Activated naive CD4-positive, alpha-beta T cell treated with anti-CD3 and anti-CD28 coated beads for 36 hours (primary cell): ENCODE measurements at regions of chrX and their contacts with region 1.

Region 1: DNA sequence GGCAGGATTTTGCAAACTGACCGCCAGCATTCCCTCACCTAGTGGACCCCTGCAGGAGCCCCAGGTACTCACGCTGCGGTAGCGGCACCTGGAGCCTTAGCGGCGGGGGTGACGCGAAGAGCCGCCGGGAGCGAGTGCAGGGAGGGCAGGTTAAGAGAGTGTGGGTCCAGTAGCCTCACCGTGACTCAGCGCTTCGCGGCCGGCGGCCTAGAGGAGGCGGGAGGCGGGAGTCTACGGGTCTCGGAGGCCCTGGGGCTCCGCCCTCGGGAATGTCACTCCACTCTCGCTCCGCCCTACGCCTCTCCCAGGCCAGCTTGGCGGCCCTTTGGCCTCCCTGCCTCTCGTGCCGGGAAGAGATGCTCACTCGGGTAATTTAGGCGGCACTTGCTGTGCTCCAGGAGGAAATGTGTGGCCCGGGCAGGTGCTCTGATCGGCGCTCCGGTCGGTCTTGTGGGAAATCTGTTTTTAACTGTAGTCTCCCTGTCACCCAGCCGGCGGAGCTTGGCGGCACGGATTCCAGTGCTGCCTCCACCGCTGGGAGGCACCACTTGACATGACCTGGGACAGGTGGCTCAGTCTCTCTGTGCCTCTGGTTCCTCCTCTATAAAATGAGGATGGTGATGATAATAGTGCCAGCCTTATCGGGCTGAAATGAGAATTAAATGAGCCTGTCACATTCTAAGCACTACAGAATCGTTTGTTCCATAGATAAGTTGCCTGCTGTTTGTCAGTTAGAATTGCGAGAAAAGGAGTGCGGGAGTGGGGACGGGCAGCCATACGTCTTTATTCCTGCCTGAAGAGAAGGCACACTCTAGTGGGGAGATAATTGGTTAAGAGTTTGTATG is at the start of gene PIR:
- DNase-seq: peak; percentile 75
- H3K4me3 Mint-ChIP-seq: peak within 1 kb of the TSS; percentile 83
- H3K27ac Mint-ChIP-seq: peak within 1 kb of the TSS; percentile 68
- H3K4me1 Mint-ChIP-seq: peaks cover 6% of the 10 kb centered on the region
- H3K27me3 Mint-ChIP-seq: no peaks in the 10 kb centered on the region
- total RNA-seq, gene PIR: 6.2 to 9.2 TPM

Region 2: DNA sequence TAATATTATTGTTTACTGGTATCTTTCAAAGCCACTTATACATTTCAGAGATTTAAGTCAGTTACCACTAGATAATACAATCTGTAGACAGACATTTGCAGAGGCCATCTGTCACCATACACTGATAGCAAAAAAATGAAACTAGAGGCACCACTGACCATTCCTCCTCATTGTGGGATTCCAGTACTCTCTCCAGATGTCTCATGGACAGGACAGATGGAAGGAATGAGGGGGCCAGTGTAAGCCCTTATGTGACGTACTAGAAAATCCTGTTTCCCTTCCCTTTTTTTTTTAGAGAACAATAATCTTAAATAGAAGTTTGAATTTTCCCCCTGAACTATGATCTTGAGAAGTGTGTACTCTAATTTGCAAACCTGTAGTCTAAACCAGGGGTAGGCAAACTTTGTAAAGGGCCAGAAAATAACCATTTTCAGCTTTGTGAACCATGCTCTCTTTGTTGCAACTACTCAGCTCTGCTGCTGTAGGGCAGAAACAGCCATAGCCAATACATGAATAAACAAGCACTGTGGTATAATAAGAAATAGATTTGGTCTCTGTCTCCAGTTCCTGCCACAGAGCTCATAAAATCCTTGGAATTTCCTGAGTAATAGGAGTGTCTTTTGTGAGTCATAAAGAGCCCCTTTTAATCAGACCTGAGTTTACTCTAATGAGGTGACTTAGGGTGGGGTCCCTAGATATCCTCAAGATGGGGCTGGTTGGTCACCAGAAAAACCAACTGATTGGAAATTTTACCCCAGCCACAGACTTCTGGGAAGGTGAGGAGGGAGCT is 529.7 kb before region 1 on chrX:
- CTCF ChIA-PET with region 1: no interaction called
- intact Hi-C with region 1: no loop called
- DNase-seq: no peak
- H3K4me3 Mint-ChIP-seq: no peak overlapping the region
- H3K27ac Mint-ChIP-seq: no peak overlapping the region
- H3K4me1 Mint-ChIP-seq: no peaks in the 10 kb centered on the region
- H3K27me3 Mint-ChIP-seq: no peaks in the 10 kb centered on the region

Region 3: GRCh38 chrX:15471016-15471415 is 22.3 kb before region 1 on chrX:
- CTCF ChIA-PET with region 1: interaction called, 5 read pairs
- intact Hi-C with region 1: loop called (anchors 1 kb)
- DNase-seq: peak; percentile 71
- H3K4me3 Mint-ChIP-seq: no peak overlapping the region
- H3K27ac Mint-ChIP-seq: no peak overlapping the region
- H3K4me1 Mint-ChIP-seq: no peaks in the 10 kb centered on the region
- H3K27me3 Mint-ChIP-seq: peaks cover 4% of the 10 kb centered on the region

Region 4: DNA sequence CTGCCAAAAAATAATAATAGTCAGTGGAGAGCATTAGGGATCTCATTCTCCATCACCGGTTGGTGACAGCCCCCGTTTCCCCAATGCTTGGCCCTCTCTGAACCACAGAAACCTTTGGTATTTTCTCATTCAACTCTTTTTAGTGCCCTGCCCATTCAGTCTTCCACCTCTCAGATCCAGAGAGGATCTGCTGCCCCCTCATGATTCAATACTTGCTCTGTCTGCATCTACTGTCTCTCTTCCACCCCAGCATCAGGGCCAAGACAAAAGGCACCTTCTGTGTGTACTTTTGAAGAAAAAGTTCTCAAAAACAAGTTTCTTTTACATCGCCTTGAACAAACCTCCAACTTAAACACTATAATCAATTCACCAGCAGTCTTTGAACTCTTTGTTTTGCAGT is 151.9 kb after region 1 on chrX:
- CTCF ChIA-PET with region 1: interaction called, 5 read pairs
- intact Hi-C with region 1: loop called (anchors 2 kb)
- DNase-seq: no peak
- H3K4me3 Mint-ChIP-seq: no peak overlapping the region
- H3K27ac Mint-ChIP-seq: peak overlapping the region; percentile 43
- H3K4me1 Mint-ChIP-seq: peaks cover 21% of the 10 kb centered on the region
- H3K27me3 Mint-ChIP-seq: no peaks in the 10 kb centered on the region

Region 5: GRCh38 chrX:15749642-15750610 is 256.6 kb after region 1 on chrX:
- CTCF ChIA-PET with region 1: no interaction called
- intact Hi-C with region 1: loop called (anchors 10 kb)
- DNase-seq: peak; percentile 31
- H3K4me3 Mint-ChIP-seq: peak overlapping the region; percentile 47
- H3K27ac Mint-ChIP-seq: peak overlapping the region; percentile 92
- H3K4me1 Mint-ChIP-seq: peaks cover 68% of the 10 kb centered on the region
- H3K27me3 Mint-ChIP-seq: no peaks in the 10 kb centered on the region

Region 6: GRCh38 chrX:16695079-16695676 is 1201.8 kb after region 1 on chrX:
- CTCF ChIA-PET with region 1: no interaction called
- intact Hi-C with region 1: loop called (anchors 10 kb)
- DNase-seq: peak; percentile 74
- H3K4me3 Mint-ChIP-seq: no peak overlapping the region
- H3K27ac Mint-ChIP-seq: no peak overlapping the region
- H3K4me1 Mint-ChIP-seq: no peaks in the 10 kb centered on the region
- H3K27me3 Mint-ChIP-seq: no peaks in the 10 kb centered on the region